Ovary (tissue), 10 donors: ENCODE measurements at regions of chr4 and their contacts with region 1.

Region 1: DNA sequence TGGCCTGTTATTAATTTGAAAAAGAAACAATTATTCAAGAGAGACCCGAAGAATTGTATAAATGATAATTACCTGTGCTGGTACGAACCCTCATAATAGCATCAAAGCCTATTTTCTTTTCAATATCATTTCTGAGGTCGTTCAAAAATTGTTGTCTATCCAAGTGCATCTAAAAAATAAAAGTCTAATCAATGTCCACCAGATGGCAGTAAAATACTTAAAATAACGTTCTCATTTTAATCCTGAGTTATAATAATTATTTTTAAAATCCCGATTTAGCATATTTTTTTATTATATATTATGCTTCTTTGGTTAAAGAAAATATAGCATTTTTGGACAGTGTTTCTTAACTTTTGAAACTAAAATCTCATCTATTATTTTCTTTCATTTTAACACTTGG is 55.7 kb downstream of the METTL14 start:
- DNase-seq: no peak
- H3K4me3 ChIP-seq: no peak overlapping the region
- H3K27ac ChIP-seq: no peak overlapping the region
- H3K4me1 ChIP-seq: no peaks in the 10 kb centered on the region
- H3K27me3 ChIP-seq: no peaks in the 10 kb centered on the region
- CTCF ChIP-seq: peak in 2 of 3 donors; percentile 40 to 57
- EP300 ChIP-seq: no peak
- POLR2A ChIP-seq: no peak

Region 2: DNA sequence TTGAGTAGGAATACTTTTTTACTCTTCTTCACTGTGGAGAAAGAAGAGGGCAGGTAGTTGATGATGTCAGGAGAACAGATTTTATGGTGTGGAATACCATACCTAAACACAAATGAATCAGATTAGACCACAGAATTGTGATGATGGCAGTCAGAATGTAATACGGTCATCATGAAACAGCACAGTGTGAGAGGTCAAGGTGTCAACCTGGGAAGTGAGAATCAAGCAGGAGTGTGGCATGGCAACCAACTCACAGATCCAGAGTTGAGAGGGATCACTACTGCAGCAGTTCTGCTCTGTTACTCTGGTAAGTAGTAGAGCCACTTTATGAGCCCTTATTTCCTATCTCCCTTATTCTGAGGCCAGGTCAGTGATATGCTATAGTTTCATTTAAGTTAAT is 28.0 kb before region 1 on chr4:
- intact Hi-C with region 1: no loop called
- DNase-seq: no peak
- H3K4me3 ChIP-seq: no peak overlapping the region
- H3K27ac ChIP-seq: no peak overlapping the region
- H3K4me1 ChIP-seq: no peaks in the 10 kb centered on the region
- H3K27me3 ChIP-seq: no peaks in the 10 kb centered on the region
- CTCF ChIP-seq: no peak
- EP300 ChIP-seq: no peak
- POLR2A ChIP-seq: no peak

Region 3: DNA sequence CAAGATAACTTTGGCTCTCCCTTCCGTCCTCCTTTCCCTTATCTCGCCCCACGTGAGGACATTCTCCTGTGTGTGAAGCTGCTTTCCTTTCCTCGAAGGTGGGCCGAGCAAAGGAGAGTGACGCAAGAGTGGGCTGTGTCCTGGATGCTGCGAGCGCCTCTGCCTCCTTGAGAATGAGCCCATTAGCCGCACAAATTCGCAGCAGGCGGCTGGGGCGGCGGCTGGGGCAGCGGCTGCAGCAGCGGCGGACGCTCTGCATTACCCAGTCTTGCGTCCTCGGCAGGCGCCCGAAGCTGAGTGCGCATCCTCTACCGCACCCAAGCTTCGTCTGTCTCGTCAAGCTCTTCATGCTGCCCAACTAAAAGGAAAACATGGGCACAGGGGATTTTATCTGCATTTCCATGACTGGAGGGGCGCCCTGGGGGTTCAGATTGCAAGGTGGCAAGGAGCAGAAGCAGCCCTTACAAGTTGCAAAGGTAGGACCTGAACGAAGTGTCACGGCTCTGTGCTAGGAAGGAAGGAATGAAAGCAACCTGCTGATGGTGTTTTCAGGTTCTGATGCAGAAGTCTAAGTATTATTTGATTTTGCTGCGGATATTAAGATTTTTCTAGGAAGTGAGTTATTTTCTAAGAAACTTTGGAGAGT is 147.9 kb after region 1 on chr4 and contains the start of gene SYNPO2:
- intact Hi-C with region 1: loop called in 3 of 4 experiments (anchors 10 kb)
- DNase-seq: peak; percentile 91 to 94 (median 92)
- H3K4me3 ChIP-seq: peak within 1 kb of the TSS; percentile 66
- H3K27ac ChIP-seq: peak within 1 kb of the TSS; percentile 16 to 71
- H3K4me1 ChIP-seq: peaks cover 1% of the 10 kb centered on the region
- H3K27me3 ChIP-seq: no peaks in the 10 kb centered on the region
- CTCF ChIP-seq: no peak
- EP300 ChIP-seq: no peak
- POLR2A ChIP-seq: peak; percentile 92
- total RNA-seq, gene SYNPO2: 61.9 to 265 (median 165) TPM

Region 4: DNA sequence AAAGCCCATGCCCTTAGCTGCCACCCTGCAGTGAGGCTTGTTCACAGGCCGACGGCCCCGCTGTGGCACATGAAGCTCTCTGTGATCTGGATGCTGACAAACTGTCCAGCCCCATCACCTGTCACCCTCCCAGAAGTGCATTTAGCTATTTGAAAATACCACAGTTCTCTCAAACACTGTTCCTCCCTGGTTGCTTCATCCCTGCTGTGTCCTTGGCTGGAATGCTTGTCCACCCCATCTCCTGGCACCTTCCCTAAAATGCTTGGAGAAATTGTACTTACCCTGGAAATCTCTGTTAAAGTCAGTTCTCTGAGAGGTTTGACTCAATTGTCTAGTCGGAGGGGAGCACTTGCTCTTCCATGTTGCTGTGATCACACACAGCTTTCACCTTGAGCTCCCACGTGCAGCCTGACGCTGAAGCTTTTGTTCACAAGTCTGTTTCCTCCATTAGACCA is 157.8 kb after region 1 on chr4:
- intact Hi-C with region 1: loop called in 2 of 4 experiments (anchors 10 kb)
- DNase-seq: peak; percentile 46 to 76 (median 62)
- H3K4me3 ChIP-seq: no peak overlapping the region
- H3K27ac ChIP-seq: peak overlapping the region; percentile 42 to 53
- H3K4me1 ChIP-seq: peaks cover 15% of the 10 kb centered on the region
- H3K27me3 ChIP-seq: no peaks in the 10 kb centered on the region
- CTCF ChIP-seq: no peak
- EP300 ChIP-seq: no peak
- POLR2A ChIP-seq: no peak

Region 5: DNA sequence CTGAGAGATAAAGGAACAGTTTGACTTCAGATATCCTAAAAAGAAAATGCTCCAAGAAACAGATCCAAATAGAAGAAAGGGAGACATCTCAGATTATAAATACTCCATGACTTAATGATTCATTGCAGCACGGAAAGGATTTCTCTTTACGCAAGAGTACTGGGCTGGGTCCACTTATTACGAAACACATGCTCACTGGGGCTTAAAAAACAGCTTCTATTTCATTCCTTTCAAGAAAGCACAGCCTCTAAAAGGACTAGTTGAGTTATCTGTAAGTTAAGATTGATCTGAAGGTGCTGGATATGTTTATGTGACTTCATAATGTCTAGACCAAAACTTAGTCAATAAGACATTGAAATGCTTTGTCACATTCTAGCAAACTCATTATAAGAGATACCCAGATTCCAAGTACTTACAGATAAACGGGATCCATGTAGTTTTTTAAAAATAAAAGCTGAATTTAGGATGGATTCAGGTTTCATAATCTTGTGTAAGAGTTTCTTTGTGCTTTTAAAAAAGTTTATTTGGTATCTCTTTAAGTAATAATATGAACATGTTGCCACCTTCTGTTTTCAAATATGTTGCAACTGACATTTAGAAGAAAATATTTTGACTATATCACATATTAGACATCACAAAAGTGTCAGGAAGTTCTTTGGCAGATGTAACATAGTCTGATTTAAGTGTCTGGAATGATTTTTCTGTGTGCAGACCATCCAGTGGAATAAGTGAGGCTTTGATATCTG is 285.2 kb after region 1 on chr4:
- intact Hi-C with region 1: loop called in 1 of 4 experiments (anchors 10 kb)
- DNase-seq: peak in 3 of 5 donors; percentile 55 to 84 (median 59)
- H3K4me3 ChIP-seq: peak overlapping the region; percentile 34
- H3K27ac ChIP-seq: peak overlapping the region; percentile 79 to 84
- H3K4me1 ChIP-seq: peaks cover 11% of the 10 kb centered on the region
- H3K27me3 ChIP-seq: no peaks in the 10 kb centered on the region
- CTCF ChIP-seq: peak in 1 of 3 donors; percentile 4
- EP300 ChIP-seq: peak; percentile 83
- POLR2A ChIP-seq: peak; percentile 36